ENCODE measurements at regions of chr2 and their contacts with region 1.

Region 1: DNA sequence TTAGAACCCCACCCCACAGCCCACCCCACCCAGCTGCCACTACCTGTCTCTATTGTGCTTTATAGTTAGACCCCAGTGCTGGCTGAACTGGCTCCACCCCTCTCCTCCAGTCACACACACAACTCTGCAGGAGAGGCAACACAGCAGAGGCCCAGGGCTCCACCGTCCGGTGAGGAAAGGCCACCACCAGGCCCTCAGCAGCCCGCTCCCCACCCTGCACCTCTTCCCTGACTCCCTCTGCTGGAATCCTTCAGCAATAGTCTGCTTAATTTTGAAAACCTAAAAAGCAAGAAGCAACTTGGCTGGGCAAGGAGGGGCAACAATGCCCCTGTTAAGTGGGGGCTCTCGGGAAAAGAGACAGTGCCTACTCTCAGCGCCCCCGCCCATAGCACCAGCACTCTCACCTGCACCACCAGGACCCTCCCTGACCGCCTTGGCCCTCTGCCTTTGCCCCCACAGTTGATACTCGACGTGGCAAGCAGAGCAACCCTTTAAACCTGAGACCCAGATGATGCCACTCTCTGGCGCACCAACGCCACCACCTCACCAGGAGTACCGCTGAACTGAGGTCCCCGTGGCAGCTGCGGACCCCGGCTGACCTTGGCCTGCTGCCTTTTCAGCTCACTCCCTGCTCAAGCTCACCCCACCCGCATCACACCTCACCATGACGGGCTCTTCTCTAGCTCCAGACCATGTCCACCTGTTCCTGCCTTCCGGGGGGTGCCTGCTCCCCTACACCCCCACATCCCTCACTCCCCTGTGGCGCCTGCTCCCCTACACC is 45.7 kb downstream of the NDUFA10 start:
- DNase-seq: no peak

Region 2: DNA sequence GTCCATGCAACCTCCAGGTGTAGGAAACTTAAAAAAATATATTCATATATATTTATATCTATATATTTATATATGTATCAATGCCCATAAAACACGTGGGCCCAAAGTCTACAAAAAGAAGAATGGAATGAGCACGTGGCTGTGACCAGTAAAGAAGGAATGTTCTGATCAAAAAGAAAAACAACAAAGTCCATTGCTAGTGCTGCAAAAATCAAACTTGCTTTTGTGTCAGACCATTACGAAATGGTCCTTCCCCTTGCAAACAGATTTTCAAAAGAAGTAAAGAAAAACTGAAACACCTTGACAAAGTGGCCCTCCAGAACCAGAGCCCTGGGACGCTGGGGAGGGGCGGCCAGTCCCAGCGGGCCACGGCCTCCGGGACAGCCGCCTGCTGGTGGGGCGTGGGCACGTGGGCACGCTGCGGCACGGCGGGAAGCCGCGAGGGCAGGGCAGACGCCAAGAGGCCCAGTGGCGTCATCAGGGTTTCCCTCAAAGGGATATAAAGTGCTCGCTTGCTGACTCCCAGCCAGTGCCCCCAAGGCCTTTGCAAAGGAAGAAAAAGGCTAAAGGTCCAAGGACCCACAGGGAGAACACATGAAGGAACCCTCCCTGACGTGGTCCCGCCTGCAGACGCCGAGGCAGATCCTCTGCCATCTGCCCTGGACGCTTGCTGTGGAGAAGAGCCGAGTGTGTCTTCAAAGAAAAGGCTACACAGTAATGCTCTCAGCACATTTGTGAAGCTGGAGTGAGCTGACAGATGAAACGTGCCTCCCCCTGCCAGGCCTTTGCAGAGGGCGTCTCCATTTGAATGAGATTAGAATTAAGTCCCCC is 929.8 kb before region 1 on chr2:
- intact Hi-C with region 1: loop called in 1 of 2 experiments (anchors 10 kb)
- DNase-seq: peak; percentile 43

Region 3: GRCh38 chr2:239944694-239945551 is 34.5 kb before region 1 on chr2:
- intact Hi-C with region 1: loop called in 1 of 2 experiments (anchors 5 kb)
- DNase-seq: peak; percentile 90